ENCODE measurements at regions of chr4 and their contacts with region 1.

Region 1: DNA sequence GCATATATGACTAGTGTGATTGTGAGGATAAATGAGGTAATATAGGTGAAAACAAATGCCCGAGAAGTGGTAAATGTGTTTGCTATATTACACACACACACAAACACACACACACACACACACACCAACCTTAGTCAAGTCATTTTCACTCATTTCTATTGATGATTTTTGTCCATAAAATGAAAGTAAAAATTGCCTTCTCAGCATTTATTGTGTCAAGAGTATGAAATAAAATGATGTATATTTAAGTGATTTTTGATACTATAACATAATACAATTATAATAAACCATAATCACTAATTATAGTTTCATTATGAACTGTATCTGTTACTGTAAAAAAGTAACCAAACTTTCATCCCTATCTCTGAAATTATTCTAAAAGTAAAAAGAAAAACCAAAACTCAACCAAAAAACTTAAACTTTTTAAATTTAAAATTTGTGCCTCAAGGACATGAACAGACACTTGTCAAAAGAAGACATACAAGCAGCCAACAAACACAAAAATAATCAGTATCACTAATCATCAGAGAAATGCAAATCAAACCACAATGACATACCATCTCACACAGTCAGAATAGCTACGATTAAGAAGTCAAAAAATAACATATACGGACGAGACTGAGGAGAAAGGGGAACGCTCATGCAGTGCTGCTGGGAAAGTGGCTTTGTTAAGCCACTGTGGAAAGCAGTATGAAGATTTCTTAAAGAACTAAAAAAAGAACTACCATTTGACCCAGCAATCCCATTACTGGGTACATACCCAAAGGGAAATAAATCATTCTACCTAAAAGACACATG is 601.0 kb downstream of the TMA16 start:
- DNase-seq: no peak
- ATAC-seq: no peak
- H3K4me3 ChIP-seq: no peak overlapping the region
- H3K4me3 Mint-ChIP-seq: no peak overlapping the region
- H3K27ac ChIP-seq: no peak overlapping the region
- H3K27ac Mint-ChIP-seq: no peak overlapping the region
- H3K4me1 ChIP-seq: no peaks in the 10 kb centered on the region
- H3K4me1 Mint-ChIP-seq: no peaks in the 10 kb centered on the region
- H3K27me3 ChIP-seq: no peaks in the 10 kb centered on the region
- H3K27me3 Mint-ChIP-seq: peaks cover 0 to 4% (median 0%) of the 10 kb centered on the region in 5 donors

Region 2: GRCh38 chr4:164109517-164109916 is 14.0 kb after region 1 on chr4:
- CTCF ChIA-PET with region 1: no interaction called
- POLR2A ChIA-PET with region 1: no interaction called
- intact Hi-C with region 1: loop called in 1 of 2 experiments (anchors 1 kb)
- DNase-seq: no peak
- ATAC-seq: no peak
- H3K4me3 ChIP-seq: no peak overlapping the region
- H3K4me3 Mint-ChIP-seq: no peak overlapping the region
- H3K27ac ChIP-seq: no peak overlapping the region
- H3K27ac Mint-ChIP-seq: no peak overlapping the region
- H3K4me1 ChIP-seq: no peaks in the 10 kb centered on the region
- H3K4me1 Mint-ChIP-seq: no peaks in the 10 kb centered on the region
- H3K27me3 ChIP-seq: no peaks in the 10 kb centered on the region
- H3K27me3 Mint-ChIP-seq: no peaks in the 10 kb centered on the region

Region 3: GRCh38 chr4:164288578-164288977 is 193.1 kb after region 1 on chr4:
- CTCF ChIA-PET with region 1: no interaction called
- POLR2A ChIA-PET with region 1: no interaction called
- intact Hi-C with region 1: no loop called
- DNase-seq: no peak
- ATAC-seq: no peak
- H3K4me3 ChIP-seq: no peak overlapping the region
- H3K4me3 Mint-ChIP-seq: no peak overlapping the region
- H3K27ac ChIP-seq: no peak overlapping the region
- H3K27ac Mint-ChIP-seq: no peak overlapping the region
- H3K4me1 ChIP-seq: no peaks in the 10 kb centered on the region
- H3K4me1 Mint-ChIP-seq: no peaks in the 10 kb centered on the region
- H3K27me3 ChIP-seq: no peaks in the 10 kb centered on the region
- H3K27me3 Mint-ChIP-seq: no peaks in the 10 kb centered on the region